H1 (cell line): ENCODE measurements at regions of chr1 and their contacts with region 1.

Region 1: DNA sequence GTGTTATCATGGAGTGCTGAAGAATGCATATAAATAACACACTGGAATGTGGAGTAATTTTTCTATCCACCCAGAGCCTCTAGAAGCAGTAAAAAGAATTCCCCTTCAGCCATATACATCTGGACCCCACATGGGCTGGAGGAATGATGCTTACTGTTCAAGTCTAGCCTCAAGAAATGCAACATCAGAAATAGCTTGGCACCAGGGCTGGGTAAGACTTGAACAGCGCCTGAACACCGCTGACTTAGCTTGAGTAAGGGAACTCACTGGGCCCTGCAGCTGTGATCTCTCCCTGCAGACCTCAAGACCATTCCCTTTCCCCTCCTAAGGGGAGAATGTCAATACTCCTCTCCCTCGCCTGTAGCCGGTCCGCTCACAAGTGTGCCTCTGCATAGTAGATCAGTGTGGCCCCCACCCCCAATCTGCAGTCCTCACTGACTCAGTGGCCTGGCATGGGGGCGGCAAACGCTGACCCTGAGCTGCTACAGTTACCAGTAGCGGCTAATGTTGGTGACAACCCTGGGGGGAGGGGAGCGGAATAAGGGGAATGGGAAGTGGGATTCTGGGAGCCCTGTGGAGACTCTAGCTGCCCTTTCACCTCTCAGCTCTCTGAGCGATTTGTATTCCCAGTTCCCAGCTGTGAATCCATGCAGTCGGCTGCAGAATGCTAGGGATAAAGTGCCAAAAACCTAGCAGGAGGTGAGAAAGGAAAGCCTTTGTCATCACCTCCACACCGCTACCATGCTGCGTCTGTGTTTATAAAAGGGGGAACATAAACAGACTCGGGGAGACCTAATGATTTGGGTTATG is 483.9 kb downstream of the DISC1 start:
- DNase-seq: peak; percentile 80 to 87
- H3K4me3 ChIP-seq: peak overlapping the region in 3 of 4 experiments; percentile 35 to 50 (median 36); a peak in 6 of 8 replicates
- H3K27ac ChIP-seq: 0 out of 2 replicates have a peak overlapping the region, but pooled peaks have one; percentile 18
- H3K4me1 ChIP-seq: peaks cover 3 to 23% (median 14%) of the 10 kb centered on the region in 4 experiments
- H3K27me3 ChIP-seq: no peaks in the 10 kb centered on the region
- CTCF ChIP-seq: no peak
- EP300 ChIP-seq: peak; percentile 8 to 83; a peak in 2 of 3 replicates
- POLR2A ChIP-seq: no peak
- RAD21 ChIP-seq: no peak; a peak in 2 of 4 replicates

Region 2: GRCh38 chr1:231986631-231987551 is 123.6 kb before region 1 on chr1:
- CTCF ChIA-PET with region 1: no interaction called
- POLR2A ChIA-PET with region 1: no interaction called
- DNase-seq: no peak
- H3K4me3 ChIP-seq: no peak overlapping the region
- H3K27ac ChIP-seq: no peak overlapping the region
- H3K4me1 ChIP-seq: peaks cover 0 to 6% (median 2%) of the 10 kb centered on the region in 4 experiments; a peak in 4 of 7 replicates
- H3K27me3 ChIP-seq: no peaks in the 10 kb centered on the region
- CTCF ChIP-seq: no peak
- EP300 ChIP-seq: no peak
- POLR2A ChIP-seq: no peak
- RAD21 ChIP-seq: no peak

Region 3: GRCh38 chr1:232127190-232127589 is 16.7 kb after region 1 on chr1:
- CTCF ChIA-PET with region 1: interaction called, 3 read pairs
- POLR2A ChIA-PET with region 1: interaction called, 126 read pairs
- DNase-seq: no peak
- H3K4me3 ChIP-seq: peak overlapping the region in 2 of 4 experiments; percentile 18 to 75; a peak in 4 of 8 replicates
- H3K27ac ChIP-seq: no peak overlapping the region
- H3K4me1 ChIP-seq: peaks cover 8 to 32% (median 26%) of the 10 kb centered on the region in 4 experiments
- H3K27me3 ChIP-seq: no peaks in the 10 kb centered on the region
- CTCF ChIP-seq: no peak
- EP300 ChIP-seq: no peak
- POLR2A ChIP-seq: no peak
- RAD21 ChIP-seq: no peak

Region 4: GRCh38 chr1:232164078-232164963 is 53.8 kb after region 1 on chr1:
- CTCF ChIA-PET with region 1: no interaction called
- POLR2A ChIA-PET with region 1: no interaction called
- DNase-seq: no peak
- H3K4me3 ChIP-seq: no peak overlapping the region
- H3K27ac ChIP-seq: no peak overlapping the region
- H3K4me1 ChIP-seq: peaks cover 0 to 9% (median 5%) of the 10 kb centered on the region in 4 experiments; a peak in 4 of 7 replicates
- H3K27me3 ChIP-seq: no peaks in the 10 kb centered on the region
- CTCF ChIP-seq: no peak
- EP300 ChIP-seq: no peak
- POLR2A ChIP-seq: no peak
- RAD21 ChIP-seq: no peak